ENCODE measurements at regions of chr12 and their contacts with region 1.

Region 1: DNA sequence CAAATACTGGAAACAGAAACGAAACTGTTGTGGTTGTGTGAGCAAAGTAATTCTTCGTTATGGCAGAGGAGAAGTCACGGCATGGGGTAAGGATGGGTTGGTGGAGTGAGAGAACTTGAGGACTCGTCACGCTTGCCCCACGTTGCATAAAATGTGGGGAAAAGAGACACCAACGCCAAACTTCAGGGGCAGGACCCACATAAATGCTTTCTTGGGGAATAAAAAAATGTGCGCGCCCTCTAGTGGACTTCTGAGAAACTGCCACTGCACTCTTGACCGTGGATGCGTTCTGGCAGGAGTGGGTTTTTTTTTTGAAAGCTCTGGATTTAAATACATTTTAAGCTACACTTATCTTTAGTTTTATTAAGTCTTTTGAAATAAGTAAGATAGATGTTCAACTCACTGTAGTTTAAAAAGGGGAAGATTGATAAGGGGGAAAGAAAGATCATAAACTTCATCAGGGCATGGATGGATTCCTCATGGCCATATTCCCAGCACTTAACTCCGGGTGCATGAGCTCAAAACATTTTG is 4.1 kb upstream of the IGF1 start:
- DNase-seq: peak; percentile 41
- CTCF ChIP-seq: peak; percentile 91

Region 2: GRCh38 chr12:102120886-102121285 is 363.6 kb before region 1 on chr12:
- CTCF ChIA-PET with region 1: interaction called, 10 read pairs
- POLR2A ChIA-PET with region 1: no interaction called
- DNase-seq: peak; percentile 16
- CTCF ChIP-seq: no peak

Region 3: GRCh38 chr12:102470945-102471344 is 13.5 kb before region 1 on chr12:
- CTCF ChIA-PET with region 1: interaction called, 18 read pairs
- POLR2A ChIA-PET with region 1: no interaction called
- DNase-seq: no peak
- CTCF ChIP-seq: no peak

Region 4: GRCh38 chr12:102498471-102498870 is 14.0 kb after region 1 on chr12:
- CTCF ChIA-PET with region 1: interaction called, 27 read pairs
- POLR2A ChIA-PET with region 1: no interaction called
- DNase-seq: no peak
- CTCF ChIP-seq: no peak

Region 5: GRCh38 chr12:102513272-102513671 is 28.8 kb after region 1 on chr12:
- CTCF ChIA-PET with region 1: interaction called, 23 read pairs
- POLR2A ChIA-PET with region 1: interaction called, 4 read pairs
- DNase-seq: peak; percentile 36
- CTCF ChIP-seq: no peak

Measured in GM10248 (cell line).